ENCODE measurements at regions of chr12 and their contacts with region 1.

Region 1: DNA sequence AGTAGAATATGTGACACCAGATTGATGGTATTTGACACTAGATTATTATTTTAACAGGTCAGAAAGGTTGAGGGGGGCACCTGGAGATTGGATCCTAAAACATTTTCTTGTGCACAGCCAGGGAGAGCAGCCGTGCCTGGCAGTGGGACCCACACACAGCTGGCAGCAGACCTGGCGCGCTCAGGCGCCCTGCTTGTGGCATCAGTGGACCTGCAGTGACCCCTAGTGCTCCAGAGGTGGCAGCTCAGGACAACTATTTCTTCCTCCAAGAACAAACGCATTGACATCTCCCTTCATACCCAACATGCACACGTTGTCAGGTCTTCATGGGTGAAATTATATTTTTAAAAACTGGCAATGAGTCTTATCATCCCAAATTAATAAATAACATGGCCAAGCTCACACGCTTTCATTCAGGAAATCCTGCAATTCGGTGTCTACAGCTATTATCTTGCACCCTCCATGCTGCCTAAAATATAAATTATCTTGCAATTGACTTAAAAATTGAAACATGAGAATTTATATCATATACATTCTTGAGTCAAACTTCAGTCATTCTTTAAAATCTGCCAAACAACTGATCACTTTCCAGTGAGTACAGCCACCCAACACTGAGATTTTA is 7.7 kb upstream of the TMEM132D start:
- DNase-seq: peak; percentile 74 to 95 (median 86)

Region 2: GRCh38 chr12:128783129-128783574 is 1128.4 kb before region 1 on chr12:
- intact Hi-C with region 1: loop called (anchors 10 kb)
- DNase-seq: no peak

Region 3: GRCh38 chr12:129844662-129845220 is 66.8 kb before region 1 on chr12:
- intact Hi-C with region 1: no loop called
- DNase-seq: no peak

Region 4: GRCh38 chr12:130013771-130014484 is 102.4 kb after region 1 on chr12:
- intact Hi-C with region 1: loop called (anchors 5 kb)
- DNase-seq: peak; percentile 72 to 96 (median 90)

Region 5: DNA sequence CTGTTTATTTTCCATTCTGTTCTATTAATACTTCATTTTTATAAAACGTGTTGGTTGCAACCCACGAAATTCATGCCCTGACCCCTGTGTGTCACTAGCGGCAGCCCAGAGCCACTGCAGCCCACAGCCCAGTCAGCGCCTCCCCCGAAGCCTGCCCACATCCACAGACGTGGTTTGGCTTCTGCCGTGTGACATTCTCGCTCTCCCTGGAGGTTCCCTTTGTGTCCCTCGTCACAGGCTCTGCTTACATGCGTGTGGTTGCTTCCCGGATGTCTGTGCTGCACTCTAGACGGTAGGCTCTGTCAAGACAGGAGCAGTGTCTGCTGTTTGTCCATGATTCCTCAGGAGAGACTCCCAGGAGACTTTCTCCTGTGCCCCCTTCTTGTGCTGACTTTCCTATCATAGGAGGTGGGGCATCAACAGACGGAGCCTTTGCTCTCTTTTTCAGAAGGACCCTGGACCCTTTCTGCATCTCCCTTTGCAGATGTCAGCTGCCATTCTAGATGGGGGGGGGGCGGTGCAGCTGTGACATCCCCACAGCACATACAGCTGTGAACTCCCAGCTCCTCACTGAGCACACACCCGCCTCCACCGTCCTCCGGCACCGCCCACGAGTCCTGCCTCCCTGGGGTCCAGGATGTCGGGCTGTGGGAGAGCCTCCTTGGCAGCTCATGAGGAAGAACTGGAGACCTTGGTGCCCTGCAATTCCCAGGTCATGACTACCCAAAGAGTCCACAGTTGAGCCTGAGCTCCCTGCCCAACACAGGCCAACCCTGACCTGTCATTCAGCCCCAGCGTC is 389.4 kb after region 1 on chr12:
- intact Hi-C with region 1: no loop called
- DNase-seq: peak in 1 of 42 donors; percentile 22